ENCODE measurements at regions of chr20 and their contacts with region 1.

Region 1: DNA sequence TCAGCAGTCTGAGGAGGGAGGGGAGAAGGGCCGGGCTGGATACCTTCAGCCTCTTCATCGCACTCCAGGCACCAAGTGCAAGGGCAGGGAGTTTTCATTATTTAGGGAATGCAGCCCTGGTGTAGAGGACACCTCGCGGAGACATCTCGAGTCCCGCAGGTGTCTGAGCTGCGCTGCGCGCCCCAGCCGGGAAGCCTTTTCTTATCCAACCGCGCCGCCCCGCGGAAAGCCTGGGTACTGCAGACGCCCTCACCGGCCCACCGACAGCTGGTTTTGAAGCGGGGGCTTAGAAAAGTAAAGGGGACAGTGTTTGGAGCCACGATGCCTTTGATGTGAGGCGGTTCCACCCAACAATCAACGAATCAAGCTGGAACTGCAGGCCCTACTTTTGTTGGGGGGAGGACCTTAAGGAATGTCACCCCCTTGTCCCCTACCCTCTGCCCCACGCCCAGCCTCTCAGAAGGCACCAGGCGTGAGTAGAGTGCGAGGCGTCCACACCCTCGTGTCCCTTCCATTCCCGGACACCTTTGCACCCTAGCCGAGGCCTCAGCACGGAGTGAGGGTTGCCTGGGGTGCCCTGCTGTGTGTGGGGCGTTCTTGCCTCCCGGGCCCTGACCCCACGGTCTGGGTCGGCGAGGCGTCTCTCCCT is 8.6 kb downstream of the NKX2-2 start:
- DNase-seq: peak; percentile 89
- ATAC-seq: peak; percentile 78
- H3K4me3 Mint-ChIP-seq: peak overlapping the region; percentile 53
- H3K27ac Mint-ChIP-seq: no peak overlapping the region
- H3K4me1 Mint-ChIP-seq: peaks cover 15% of the 10 kb centered on the region
- H3K27me3 Mint-ChIP-seq: peaks cover 51% of the 10 kb centered on the region
- CTCF ChIP-seq: peak; percentile 95

Region 2: DNA sequence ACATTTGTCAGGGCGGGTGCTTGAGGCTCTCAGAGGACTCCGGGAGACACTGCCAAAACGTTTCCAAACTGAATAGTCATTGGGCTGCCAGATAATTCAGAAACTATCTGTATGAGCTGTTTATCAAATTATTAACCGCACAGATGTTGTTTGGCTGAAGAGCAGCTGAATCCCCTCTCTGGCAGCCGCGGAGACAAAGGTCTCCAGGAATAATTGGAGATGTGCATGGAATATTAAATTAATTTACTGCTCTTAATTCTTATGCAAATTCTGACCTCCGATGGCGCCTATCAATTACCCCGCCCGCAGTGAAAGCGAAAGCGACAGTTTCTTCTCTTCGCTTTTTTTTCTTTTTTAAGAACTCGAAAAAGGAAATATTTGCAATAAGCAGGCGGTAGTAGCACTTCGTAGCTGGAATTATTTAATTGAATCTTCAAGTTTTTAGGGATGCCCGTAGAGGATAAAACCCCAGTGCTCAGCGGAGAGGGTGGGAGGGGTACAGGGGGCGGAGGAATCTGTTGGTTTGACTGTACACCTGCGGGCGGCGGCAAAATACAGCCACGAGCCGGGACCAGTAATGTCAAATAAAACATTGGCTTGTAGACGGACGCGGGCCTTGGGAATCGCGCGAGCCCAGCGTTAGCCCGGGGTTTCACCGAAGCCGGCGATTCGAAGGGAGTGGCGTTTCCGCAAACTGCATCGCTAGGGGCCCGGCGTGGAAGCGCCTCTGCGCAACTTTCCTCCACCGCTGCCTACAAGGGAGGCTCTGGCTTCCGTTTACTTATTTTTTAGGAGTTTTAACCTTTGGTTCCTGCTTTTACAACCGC is 405.3 kb before region 1 on chr20:
- CTCF ChIA-PET with region 1: no interaction called
- POLR2A ChIA-PET with region 1: no interaction called
- intact Hi-C with region 1: loop called (anchors 10 kb)
- DNase-seq: peak; percentile 67
- ATAC-seq: peak; percentile 46
- H3K4me3 Mint-ChIP-seq: peak overlapping the region; percentile 80
- H3K27ac Mint-ChIP-seq: peak overlapping the region; percentile 91
- H3K4me1 Mint-ChIP-seq: peaks cover 32% of the 10 kb centered on the region
- H3K27me3 Mint-ChIP-seq: peaks cover 72% of the 10 kb centered on the region
- CTCF ChIP-seq: no peak

Region 3: DNA sequence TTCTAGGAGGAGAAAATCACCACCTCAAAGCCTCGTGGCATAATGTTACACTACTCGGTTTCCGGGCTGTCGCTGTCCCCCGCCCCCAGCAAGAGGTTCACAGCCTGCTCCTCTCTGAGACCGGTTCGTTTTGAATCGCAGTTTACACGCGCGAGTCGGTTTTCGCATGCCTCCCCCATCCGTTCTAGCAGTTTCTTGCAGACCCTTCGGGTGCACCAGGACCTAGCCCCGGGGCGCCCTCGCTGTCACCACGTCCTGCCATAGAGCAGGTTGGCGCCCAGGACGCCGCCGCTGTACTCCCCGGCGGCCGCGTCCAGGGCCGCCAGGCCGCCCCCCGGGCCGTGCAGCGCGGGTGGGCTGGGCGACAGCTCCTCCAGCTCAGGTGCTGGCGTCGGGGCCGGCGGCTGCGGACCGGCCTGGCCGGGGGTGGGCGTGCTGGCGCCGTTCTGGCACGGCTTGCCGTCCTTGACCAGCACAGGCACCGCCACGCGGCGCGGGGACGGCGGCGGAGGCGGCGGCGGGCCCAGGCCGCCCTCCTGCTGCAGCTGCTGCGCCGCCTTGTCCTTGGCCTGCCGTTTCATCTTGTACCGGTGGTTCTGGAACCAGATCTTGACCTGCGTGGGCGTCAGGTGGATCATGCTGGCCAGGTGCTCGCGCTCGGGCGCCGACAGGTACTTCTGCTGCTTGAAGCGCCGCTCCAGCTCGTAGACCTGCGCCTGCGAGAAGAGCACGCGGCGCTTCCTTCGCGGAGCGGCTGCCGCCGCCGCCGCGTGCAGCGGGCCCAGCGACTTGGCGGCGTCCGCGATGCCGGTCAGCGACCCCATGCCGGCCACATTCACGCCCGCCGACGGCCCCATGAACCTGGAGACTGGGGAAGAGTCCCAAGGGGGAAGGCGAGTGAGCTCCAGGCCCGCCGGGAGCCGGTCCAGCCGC is 109.4 kb before region 1 on chr20:
- CTCF ChIA-PET with region 1: interaction called, 8 read pairs
- POLR2A ChIA-PET with region 1: no interaction called
- intact Hi-C with region 1: loop called (anchors 5 kb)
- DNase-seq: peak; percentile 68
- ATAC-seq: peak; percentile 77
- H3K4me3 Mint-ChIP-seq: peak overlapping the region; percentile 64
- H3K27ac Mint-ChIP-seq: no peak overlapping the region
- H3K4me1 Mint-ChIP-seq: peaks cover 18% of the 10 kb centered on the region
- H3K27me3 Mint-ChIP-seq: peaks cover 69% of the 10 kb centered on the region
- CTCF ChIP-seq: no peak

Region 4: DNA sequence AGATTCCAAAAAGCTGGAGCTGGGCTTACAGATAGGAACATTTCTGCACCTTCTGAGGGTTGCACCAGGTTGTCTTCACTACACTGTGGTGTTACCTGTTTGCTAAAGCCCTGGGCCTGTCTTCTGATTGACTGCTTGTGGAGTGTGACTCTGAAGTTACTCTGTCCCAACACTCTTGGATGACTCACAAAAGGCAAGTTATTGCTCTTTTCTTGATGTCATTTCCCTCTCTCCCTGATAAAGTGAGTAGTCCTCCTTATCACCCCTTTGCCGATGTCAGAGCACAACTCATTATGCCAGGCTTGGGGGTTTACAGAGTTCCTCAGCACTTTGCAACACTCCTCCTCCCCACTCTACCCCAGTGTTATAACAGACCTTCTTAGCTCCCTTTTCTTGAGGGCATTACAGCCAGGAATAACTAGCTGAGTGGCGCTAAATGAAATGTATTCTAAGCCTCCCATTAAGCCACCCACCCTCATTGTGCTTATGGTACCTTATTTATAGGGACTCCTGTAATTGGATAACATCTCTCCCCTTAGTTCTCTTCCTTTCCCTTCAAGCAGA is 71.9 kb before region 1 on chr20:
- CTCF ChIA-PET with region 1: no interaction called
- POLR2A ChIA-PET with region 1: no interaction called
- intact Hi-C with region 1: no loop called
- DNase-seq: no peak
- ATAC-seq: no peak
- H3K4me3 Mint-ChIP-seq: no peak overlapping the region
- H3K27ac Mint-ChIP-seq: no peak overlapping the region
- H3K4me1 Mint-ChIP-seq: no peaks in the 10 kb centered on the region
- H3K27me3 Mint-ChIP-seq: peaks cover 19% of the 10 kb centered on the region
- CTCF ChIP-seq: no peak

Region 5: DNA sequence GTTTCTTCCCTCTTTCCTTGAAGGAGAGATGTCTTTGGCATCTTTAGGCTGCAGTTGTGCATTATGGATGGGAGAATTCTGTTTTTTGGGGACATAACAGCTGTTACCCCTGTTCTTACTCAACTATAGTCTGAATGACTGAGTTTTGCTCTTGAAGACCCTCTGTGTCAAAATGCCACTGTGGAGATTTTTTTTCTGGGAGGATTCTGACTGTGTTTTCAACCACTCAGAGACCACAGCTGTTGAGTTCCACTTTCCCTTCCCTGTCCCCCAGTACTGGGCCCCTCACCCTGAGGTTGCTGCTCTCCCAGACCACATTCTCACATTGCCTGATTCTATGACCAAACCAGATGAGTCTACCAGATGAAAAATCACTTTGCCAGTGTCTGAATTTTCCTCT is 39.5 kb before region 1 on chr20:
- CTCF ChIA-PET with region 1: no interaction called
- POLR2A ChIA-PET with region 1: no interaction called
- intact Hi-C with region 1: no loop called
- DNase-seq: no peak
- ATAC-seq: no peak
- H3K4me3 Mint-ChIP-seq: no peak overlapping the region
- H3K27ac Mint-ChIP-seq: no peak overlapping the region
- H3K4me1 Mint-ChIP-seq: no peaks in the 10 kb centered on the region
- H3K27me3 Mint-ChIP-seq: peaks cover 10% of the 10 kb centered on the region
- CTCF ChIP-seq: no peak

Region 6: DNA sequence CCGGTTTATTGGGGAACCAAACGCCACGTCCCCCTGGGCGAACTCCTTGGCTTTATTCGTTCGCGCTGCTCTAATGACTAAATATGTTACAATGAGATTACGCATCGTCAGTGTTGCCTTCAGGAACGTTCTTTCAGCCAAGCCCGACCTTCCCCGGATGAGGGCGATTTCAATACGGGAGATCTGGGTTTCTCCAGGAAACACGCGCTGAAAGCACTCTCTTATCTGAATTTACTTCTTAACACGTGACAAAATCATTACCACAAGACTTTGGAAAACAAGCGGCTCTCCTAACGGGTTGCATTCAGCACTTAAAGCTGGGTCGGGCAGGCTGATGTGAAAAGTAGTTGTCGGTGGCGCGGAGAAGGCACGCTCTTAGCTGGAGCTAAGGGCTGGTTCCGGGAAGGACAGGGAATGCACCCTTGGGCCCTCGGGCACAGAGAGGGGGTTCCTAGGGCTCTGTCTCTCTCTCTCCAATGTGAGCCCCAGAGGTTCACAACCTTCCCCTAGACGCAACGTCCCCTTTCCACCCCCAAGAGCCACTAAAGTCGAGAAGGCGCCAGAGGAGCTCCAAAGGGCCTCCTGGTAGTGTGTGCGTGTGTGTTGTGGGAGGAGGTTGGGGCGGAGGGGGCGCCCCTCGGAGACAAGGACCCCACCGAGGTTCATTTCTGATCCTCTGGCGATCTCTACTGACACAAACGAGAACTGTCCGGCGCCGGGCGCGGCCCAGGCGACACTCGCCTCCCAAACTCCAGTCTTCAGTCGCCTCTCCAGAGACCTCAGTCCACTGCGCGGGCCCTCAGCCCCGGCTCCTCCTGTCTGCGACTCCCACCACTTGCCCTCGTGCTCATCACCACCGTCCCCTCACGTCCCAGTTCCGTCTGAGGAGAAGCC is 15.7 kb after region 1 on chr20:
- CTCF ChIA-PET with region 1: interaction called, 42 read pairs
- POLR2A ChIA-PET with region 1: interaction called, 3 read pairs
- intact Hi-C with region 1: no loop called
- DNase-seq: no peak
- ATAC-seq: no peak
- H3K4me3 Mint-ChIP-seq: no peak overlapping the region
- H3K27ac Mint-ChIP-seq: no peak overlapping the region
- H3K4me1 Mint-ChIP-seq: peaks cover 20% of the 10 kb centered on the region
- H3K27me3 Mint-ChIP-seq: peaks cover 86% of the 10 kb centered on the region
- CTCF ChIP-seq: no peak

Region 7: DNA sequence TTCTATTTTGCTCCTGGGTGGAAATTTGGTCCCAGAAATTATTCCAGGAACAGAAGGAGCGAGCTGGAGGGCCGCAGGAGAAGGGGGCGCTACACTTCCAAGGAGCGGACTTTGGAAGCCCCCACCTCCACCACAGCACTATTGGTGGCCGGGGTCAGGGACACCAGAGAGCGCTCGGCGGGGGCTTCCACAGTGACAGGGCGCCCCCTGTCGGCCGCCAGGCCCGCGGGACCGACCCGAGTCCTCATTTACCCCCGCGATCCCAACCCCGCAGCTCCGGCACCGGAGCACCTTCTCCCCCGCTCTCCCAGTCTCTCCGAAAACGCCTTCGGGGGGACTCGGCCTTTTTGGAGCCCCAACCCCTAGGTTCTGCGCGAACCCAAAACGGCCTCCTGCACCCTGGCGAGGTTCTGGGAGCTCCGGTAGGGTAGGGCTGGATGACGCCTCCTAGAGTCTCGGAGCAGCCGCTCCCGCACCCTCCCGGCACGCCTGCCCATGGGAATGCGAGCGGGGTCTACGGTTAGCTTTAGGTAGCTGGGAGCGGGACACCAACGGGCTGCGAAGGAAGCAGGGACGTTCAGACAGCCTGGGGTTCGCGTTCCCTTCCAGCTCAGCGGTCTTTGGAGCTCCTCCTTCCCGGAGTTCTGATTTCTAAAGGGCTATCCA is 1081.5 kb after region 1 on chr20:
- CTCF ChIA-PET with region 1: no interaction called
- POLR2A ChIA-PET with region 1: no interaction called
- intact Hi-C with region 1: loop called (anchors 10 kb)
- DNase-seq: peak; percentile 45
- ATAC-seq: no peak
- H3K4me3 Mint-ChIP-seq: no peak overlapping the region
- H3K27ac Mint-ChIP-seq: no peak overlapping the region
- H3K4me1 Mint-ChIP-seq: peaks cover 2% of the 10 kb centered on the region
- H3K27me3 Mint-ChIP-seq: peaks cover 52% of the 10 kb centered on the region
- CTCF ChIP-seq: peak; percentile 47

Measured in activated CD8-positive, alpha-beta T cell treated with anti-CD3 and anti-CD28 coated beads for 36 hours (primary cell).